Prostate gland (tissue), 2 donors: ENCODE measurements at regions of chr15 and their contacts with region 1.

Region 1: DNA sequence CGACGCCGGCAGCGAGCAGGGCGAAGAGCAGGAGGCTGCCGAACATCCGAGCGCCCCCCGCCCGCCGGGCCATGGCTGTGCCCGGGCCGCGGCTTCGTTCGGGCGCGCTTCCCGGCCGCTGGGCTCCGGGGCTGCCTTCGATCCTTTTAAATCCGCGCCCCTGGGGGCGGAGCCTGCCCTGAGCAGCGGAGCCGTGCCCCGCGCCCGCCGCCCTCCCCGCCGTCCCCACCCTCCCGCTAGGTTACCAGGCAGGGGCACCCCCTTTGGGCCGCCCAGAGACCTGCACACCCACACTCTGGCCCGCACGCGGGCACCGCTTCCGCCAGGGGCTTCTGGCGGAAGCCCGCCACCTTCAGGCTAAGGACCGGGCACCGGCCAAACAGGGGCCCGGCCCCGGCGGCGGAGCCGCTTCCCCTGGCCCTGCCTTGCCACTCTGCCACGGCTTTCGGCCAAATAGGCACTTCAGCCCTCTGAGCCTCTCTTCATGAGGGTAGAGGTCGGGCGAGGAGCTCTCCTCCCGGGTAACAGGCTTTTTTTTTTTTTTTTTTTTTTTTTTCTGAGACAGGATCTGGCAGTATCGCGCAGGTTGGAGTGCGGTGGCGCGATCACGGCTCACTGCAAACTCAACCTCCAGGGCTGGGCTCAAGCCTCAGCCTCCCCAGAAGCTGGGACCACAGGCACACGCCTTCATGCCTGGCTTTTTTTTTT is at the start of gene NMB:
- DNase-seq: peak; percentile 72
- H3K4me3 ChIP-seq: peak within 1 kb of the TSS; percentile 58 to 64
- H3K27ac ChIP-seq: peak within 1 kb of the TSS; percentile 75 to 79
- H3K4me1 ChIP-seq: peaks cover 3% of the 10 kb centered on the region
- H3K27me3 ChIP-seq: no peaks in the 10 kb centered on the region
- CTCF ChIP-seq: peak; percentile 35 to 75 (median 54)
- POLR2A ChIP-seq: peak; percentile 60
- total RNA-seq, gene NMB: 6.2 to 16.6 TPM

Region 2: DNA sequence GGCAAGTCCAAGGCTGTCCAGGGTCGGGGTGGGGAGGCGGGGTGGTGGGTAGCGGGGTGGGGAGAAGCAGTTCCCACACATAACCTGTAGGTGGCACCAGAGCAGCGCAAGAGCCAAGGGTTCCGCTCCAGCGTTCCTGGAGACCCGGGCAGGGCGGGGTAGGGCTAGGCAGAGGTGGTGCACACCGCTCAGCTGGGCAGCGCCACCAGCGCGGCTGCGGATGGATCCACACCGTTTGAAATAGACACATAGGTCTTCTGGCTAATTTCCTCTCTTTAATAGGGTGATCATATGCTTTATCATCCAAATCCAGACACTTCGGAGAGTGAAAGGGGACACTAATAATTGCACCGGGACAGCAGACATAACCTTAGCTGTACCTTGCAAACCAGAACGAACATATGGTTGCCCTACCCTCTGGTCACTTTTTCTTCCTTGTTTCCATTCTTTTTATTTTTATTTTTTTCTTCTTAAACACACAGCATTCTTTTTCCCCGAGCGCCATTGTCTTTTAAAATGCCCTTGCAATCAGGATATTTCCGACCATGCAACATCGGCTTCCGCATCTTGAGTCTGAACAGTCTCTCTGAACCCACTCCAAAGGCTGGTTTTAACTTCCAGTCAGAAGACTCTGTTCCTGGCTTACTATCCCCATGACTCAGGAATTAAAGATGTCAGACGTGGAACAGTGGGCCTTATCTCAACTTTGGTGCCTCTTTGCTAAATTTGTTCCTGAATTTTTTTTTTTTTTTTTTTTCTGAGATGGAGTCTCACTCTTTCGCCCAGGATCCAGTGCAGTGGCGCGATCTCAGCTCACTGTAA is 70.0 kb before region 1 on chr15:
- intact Hi-C with region 1: loop called (anchors 5 kb)
- DNase-seq: peak; percentile 82
- H3K4me3 ChIP-seq: peak overlapping the region; percentile 25 to 32
- H3K27ac ChIP-seq: no peak overlapping the region
- H3K4me1 ChIP-seq: no peaks in the 10 kb centered on the region
- H3K27me3 ChIP-seq: no peaks in the 10 kb centered on the region
- CTCF ChIP-seq: peak; percentile 68 to 84 (median 73)
- POLR2A ChIP-seq: no peak

Region 3: GRCh38 chr15:84716036-84716799 is 58.0 kb after region 1 on chr15 and contains the start of gene SEC11A:
- intact Hi-C with region 1: loop called (anchors 5 kb)
- DNase-seq: peak; percentile 95
- H3K4me3 ChIP-seq: peak within 1 kb of the TSS; percentile 78 to 85
- H3K27ac ChIP-seq: peak within 1 kb of the TSS; percentile 96 to 97
- H3K4me1 ChIP-seq: no peaks in the 10 kb centered on the region
- H3K27me3 ChIP-seq: no peaks in the 10 kb centered on the region
- CTCF ChIP-seq: no peak
- POLR2A ChIP-seq: peak; percentile 90
- total RNA-seq, gene SEC11A: 91.2 to 115 TPM

Region 4: DNA sequence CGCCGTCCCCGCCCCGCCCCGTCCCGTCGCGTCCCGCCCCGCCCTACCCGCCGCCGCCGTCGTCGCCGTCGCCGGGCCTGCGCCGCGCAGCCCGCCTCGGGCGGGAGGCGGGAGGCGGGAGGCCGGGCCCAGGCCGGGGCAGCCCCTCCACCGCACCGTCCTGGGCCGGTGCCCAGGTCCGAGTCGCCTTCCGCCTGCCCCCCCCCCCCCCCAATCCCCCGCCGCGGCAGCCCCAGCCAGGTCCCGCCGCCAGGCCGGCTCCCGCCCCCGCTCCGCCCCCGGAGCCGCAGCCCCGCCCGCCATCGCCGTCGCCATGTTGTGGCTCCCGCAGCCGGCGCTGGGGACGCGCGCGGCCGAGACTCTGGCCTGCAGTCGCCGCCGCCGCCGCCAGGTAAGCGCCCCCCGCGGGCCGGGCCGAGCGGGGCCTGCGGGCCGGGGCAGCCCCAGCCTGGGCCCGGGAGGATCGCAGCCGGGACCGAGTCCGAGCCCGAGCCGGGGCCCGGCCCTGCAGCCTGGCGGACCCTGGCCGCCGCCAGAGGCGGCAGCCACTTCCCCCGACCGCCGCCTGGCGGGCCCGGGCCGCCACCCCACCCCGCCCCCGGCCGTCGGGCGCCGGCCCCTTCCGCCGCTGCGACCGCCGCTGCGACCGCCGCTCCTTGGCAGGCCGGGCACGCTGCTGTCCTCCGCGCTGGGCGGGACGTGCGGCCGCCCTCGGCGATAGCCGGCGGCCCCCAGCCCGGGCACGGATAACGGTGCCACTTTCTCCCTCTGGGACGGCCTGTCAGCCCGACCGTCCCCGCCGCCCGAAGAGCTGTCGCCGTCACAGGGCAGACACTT is 90.3 kb after region 1 on chr15 and contains the start of gene ZNF592:
- intact Hi-C with region 1: loop called (anchors 10 kb)
- DNase-seq: peak; percentile 73
- H3K4me3 ChIP-seq: peak within 1 kb of the TSS; percentile 81 to 86
- H3K27ac ChIP-seq: peak within 1 kb of the TSS; percentile 99 to 100
- H3K4me1 ChIP-seq: peaks cover 3% of the 10 kb centered on the region
- H3K27me3 ChIP-seq: no peaks in the 10 kb centered on the region
- CTCF ChIP-seq: peak in 2 of 4 experiments; percentile 9 to 76
- POLR2A ChIP-seq: no peak
- total RNA-seq, gene ZNF592: 20.8 to 38.7 TPM

Region 5: GRCh38 chr15:84863565-84864443 is 205.6 kb after region 1 on chr15:
- intact Hi-C with region 1: no loop called
- DNase-seq: no peak
- H3K4me3 ChIP-seq: no peak overlapping the region
- H3K27ac ChIP-seq: no peak overlapping the region
- H3K4me1 ChIP-seq: peaks cover 4% of the 10 kb centered on the region
- H3K27me3 ChIP-seq: no peaks in the 10 kb centered on the region
- CTCF ChIP-seq: no peak
- POLR2A ChIP-seq: no peak